Heart right ventricle (tissue), 16 donors: ENCODE measurements at regions of chr13 and their contacts with region 1.

Region 1: GRCh38 chr13:41652727-41653361 is 195.5 kb downstream of the RGCC start:
- DNase-seq: peak in 1 of 2 donors; percentile 42
- ATAC-seq: peak in 3 of 8 donors; percentile 35 to 49 (median 45)
- H3K4me3 ChIP-seq: no peak overlapping the region
- H3K27ac ChIP-seq: peak overlapping the region in 7 of 10 donors; percentile 17 to 80 (median 35)
- H3K4me1 ChIP-seq: peaks cover 0 to 46% (median 19%) of the 10 kb centered on the region in 9 donors
- H3K27me3 ChIP-seq: no peaks in the 10 kb centered on the region
- CTCF ChIP-seq: peak; percentile 32 to 84 (median 68)

Region 2: DNA sequence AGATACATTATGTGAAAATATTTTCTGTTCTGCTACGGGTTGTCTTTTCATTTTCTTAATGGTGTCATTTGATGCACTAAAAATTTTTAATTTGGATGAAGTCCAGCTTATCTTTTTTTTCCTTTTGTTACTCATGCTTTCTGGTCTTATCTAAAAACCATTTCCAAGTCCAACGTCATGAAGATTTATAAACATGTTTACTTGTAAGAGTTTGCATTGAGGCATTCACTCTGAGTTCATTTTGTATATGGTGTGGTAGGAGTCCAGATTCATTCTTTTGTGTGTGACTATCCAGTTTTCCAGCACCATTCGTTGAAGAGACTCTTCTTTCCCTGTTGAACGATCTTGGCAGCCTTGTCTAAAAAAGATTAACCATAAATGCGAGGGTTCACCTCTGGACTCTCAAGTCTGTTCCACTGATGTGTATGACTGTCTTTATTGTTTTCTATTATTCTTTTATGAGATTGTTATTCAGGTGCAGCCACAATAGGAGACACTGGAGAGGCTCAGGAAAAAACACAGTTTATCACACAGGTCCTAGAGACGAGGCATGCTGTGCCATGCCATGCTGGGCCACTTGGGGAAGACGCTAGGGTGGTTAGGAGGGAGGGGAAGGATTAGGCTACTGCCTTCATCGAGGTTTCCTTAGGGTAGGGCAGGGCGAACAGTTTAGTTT is 306.8 kb before region 1 on chr13:
- intact Hi-C with region 1: loop called in 7 of 10 experiments (anchors 5 to 10 kb)
- DNase-seq: no peak
- ATAC-seq: peak in 5 of 8 donors; percentile 27 to 74 (median 40)
- H3K4me3 ChIP-seq: no peak overlapping the region
- H3K27ac ChIP-seq: peak overlapping the region in 6 of 10 donors; percentile 0 to 36 (median 24)
- H3K4me1 ChIP-seq: peaks cover 0 to 16% (median 6%) of the 10 kb centered on the region in 9 donors
- H3K27me3 ChIP-seq: no peaks in the 10 kb centered on the region
- CTCF ChIP-seq: no peak

Region 3: GRCh38 chr13:41384755-41385503 is 267.9 kb before region 1 on chr13:
- intact Hi-C with region 1: loop called in 2 of 10 experiments (anchors 10 kb)
- DNase-seq: no peak
- ATAC-seq: no peak
- H3K4me3 ChIP-seq: no peak overlapping the region
- H3K27ac ChIP-seq: no peak overlapping the region
- H3K4me1 ChIP-seq: peaks cover 0 to 30% (median 15%) of the 10 kb centered on the region in 9 donors
- H3K27me3 ChIP-seq: no peaks in the 10 kb centered on the region
- CTCF ChIP-seq: peak in 8 of 9 donors; percentile 9 to 51 (median 40)

Region 4: GRCh38 chr13:41411522-41411921 is 241.3 kb before region 1 on chr13:
- intact Hi-C with region 1: loop called in 6 of 10 experiments (anchors 2 to 10 kb)
- DNase-seq: peak in 1 of 2 donors; percentile 26
- ATAC-seq: peak in 7 of 8 donors; percentile 17 to 83 (median 60)
- H3K4me3 ChIP-seq: no peak overlapping the region
- H3K27ac ChIP-seq: no peak overlapping the region
- H3K4me1 ChIP-seq: no peaks in the 10 kb centered on the region
- H3K27me3 ChIP-seq: no peaks in the 10 kb centered on the region
- CTCF ChIP-seq: peak in 6 of 9 donors; percentile 32 to 60 (median 47)

Region 5: DNA sequence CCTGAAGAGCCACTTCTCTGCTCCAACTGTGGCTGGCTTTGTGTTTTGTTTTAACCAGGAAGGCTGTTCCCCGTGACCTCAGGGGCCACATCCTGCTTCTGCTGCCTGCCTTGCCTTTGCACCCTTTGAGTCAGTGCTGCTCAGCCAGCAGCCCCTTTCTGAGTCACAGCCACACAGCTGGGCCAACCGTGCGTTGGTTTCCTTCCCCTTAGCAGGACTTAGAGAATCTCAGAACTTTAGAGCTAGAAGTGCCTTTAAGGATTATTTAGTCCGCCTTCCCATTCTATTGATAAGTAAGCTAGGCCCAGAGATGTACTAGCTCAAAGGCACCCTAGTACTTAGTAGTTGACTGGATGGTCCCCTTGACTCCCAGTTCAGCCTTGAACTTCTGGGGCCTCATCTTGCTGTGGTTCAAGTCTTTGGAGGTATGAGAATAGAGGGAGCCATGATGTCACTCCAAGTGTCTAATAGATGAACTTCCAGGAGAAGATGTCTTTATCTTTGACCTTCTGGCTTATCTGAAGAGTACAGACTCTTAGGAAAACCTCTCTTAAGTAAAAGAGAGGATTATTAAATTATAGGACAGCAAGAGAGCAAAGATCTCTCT is 187.5 kb before region 1 on chr13:
- intact Hi-C with region 1: loop called in 2 of 10 experiments (anchors 10 kb)
- DNase-seq: peak; percentile 51 to 66
- ATAC-seq: peak; percentile 44 to 88 (median 78)
- H3K4me3 ChIP-seq: peak overlapping the region in 1 of 10 donors; percentile 62
- H3K27ac ChIP-seq: peak overlapping the region in 9 of 10 donors; percentile 28 to 86 (median 71)
- H3K4me1 ChIP-seq: peaks cover 3 to 67% (median 31%) of the 10 kb centered on the region in 9 donors
- H3K27me3 ChIP-seq: peaks cover 0 to 4% (median 0%) of the 10 kb centered on the region in 7 donors
- CTCF ChIP-seq: no peak

Region 6: GRCh38 chr13:41546372-41547190 is 106.3 kb before region 1 on chr13:
- intact Hi-C with region 1: loop called in 1 of 10 experiments (anchors 5 kb)
- DNase-seq: no peak
- ATAC-seq: peak in 1 of 8 donors; percentile 0
- H3K4me3 ChIP-seq: no peak overlapping the region
- H3K27ac ChIP-seq: peak overlapping the region in 9 of 10 donors; percentile 68 to 85 (median 76)
- H3K4me1 ChIP-seq: peaks cover 0 to 32% (median 18%) of the 10 kb centered on the region in 9 donors
- H3K27me3 ChIP-seq: no peaks in the 10 kb centered on the region
- CTCF ChIP-seq: no peak

Region 7: GRCh38 chr13:41613984-41614661 is 38.7 kb before region 1 on chr13:
- intact Hi-C with region 1: loop called in 4 of 10 experiments (anchors 2 to 5 kb)
- DNase-seq: peak; percentile 48 to 77
- ATAC-seq: peak; percentile 90 to 96 (median 93)
- H3K4me3 ChIP-seq: no peak overlapping the region
- H3K27ac ChIP-seq: peak overlapping the region; percentile 28 to 87 (median 72)
- H3K4me1 ChIP-seq: peaks cover 13 to 54% (median 40%) of the 10 kb centered on the region in 9 donors
- H3K27me3 ChIP-seq: no peaks in the 10 kb centered on the region
- CTCF ChIP-seq: no peak

Region 8: GRCh38 chr13:41942462-41943094 is 289.7 kb after region 1 on chr13:
- intact Hi-C with region 1: no loop called
- DNase-seq: no peak
- ATAC-seq: peak in 7 of 8 donors; percentile 40 to 74 (median 63)
- H3K4me3 ChIP-seq: no peak overlapping the region
- H3K27ac ChIP-seq: peak overlapping the region in 7 of 10 donors; percentile 18 to 80 (median 69)
- H3K4me1 ChIP-seq: peaks cover 0 to 44% (median 13%) of the 10 kb centered on the region in 9 donors
- H3K27me3 ChIP-seq: no peaks in the 10 kb centered on the region
- CTCF ChIP-seq: peak in 5 of 9 donors; percentile 10 to 44 (median 41)